ENCODE measurements at regions of chr12 and their contacts with region 1.

Region 1: DNA sequence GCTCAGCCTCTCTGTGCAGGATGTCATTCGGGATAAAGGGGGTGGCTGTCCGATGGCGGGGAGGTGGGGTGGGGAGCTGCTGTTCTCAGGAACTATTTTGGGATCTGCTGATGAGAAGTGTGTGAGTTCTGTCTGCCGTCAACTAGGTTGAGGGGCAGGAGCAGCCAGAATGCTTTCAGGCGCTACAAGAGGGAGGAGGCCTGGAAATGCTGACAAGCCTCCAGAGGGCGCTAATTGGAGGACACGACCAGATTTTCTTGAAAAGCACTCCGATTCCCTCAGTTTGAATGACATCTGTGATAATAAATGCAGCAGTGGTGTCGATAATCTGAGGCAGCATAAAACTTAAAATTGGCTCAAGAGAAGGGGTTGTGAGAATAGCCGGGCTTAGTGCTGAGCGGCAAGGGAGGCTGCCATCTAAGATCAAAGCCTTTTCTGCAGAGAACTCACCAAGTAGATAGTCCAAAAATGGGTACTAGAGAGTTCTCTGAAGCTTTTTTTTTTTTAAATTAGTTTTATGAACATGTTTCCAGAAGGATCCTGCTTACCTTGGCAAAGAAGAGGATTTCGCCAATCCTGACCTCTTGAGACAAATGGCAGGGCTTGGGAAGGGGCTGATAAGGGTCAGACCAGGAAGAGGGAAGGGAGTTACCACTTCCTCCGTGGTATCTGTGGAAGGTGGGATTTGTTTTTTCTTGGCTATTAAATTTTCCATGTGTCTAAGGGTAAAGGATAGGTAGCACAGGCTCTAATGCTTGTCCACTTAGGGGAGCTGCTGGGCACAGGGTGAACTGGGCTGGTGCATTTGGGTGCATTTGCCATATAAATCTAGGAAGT is 94.4 kb downstream of the CRACR2A start:
- DNase-seq: peak; percentile 59
- H3K4me3 Mint-ChIP-seq: no peak overlapping the region
- H3K27ac Mint-ChIP-seq: no peak overlapping the region
- H3K4me1 Mint-ChIP-seq: no peaks in the 10 kb centered on the region
- H3K27me3 Mint-ChIP-seq: no peaks in the 10 kb centered on the region

Region 2: DNA sequence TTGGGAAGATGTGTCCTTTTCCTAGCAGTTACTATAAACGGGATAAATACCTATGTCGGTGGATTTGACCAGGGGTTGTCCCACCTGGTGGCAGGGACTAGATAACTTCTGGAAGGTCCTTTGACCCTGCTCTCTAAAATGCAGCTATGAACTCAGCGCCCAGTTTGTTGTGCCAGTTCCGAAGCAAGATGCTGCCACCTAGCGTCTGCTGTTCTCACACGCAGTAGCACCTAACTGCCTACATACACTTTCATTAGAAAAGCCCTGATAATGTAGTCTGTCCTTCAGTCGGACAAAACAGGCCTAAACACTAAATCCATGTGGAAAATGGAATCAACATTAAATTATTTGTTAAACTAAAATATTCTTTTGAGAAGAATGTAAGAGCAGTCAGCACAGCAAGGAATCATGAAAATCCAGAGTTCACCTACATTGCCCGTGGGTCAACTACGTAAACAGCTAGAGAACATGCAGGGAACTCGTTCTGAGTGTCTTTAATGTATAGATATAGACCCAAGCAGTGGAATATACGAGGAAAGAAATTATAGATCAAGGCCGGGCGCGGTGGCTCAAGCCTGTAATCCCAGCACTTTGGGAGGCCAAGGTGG is 145.4 kb after region 1 on chr12:
- CTCF ChIA-PET with region 1: interaction called, 12 read pairs
- DNase-seq: peak; percentile 82
- H3K4me3 Mint-ChIP-seq: no peak overlapping the region
- H3K27ac Mint-ChIP-seq: peak overlapping the region; percentile 5
- H3K4me1 Mint-ChIP-seq: peaks cover 4% of the 10 kb centered on the region
- H3K27me3 Mint-ChIP-seq: no peaks in the 10 kb centered on the region

Measured in activated naive CD4-positive, alpha-beta T cell treated with anti-CD3 and anti-CD28 coated beads, Interleukin-2, amount 10 ng/mL, durations not matched to agents 7 days and 5 days (primary cell).